ENCODE measurements at regions of chr5 and their contacts with region 1.

Region 1: GRCh38 chr5:96714951-96715451 is 52.8 kb downstream of the CAST start:
- DNase-seq: no peak
- H3K4me3 ChIP-seq: no peak overlapping the region
- H3K27ac ChIP-seq: peak overlapping the region; percentile 69
- H3K4me1 ChIP-seq: peaks cover 85% of the 10 kb centered on the region
- H3K27me3 ChIP-seq: no peaks in the 10 kb centered on the region
- CTCF ChIP-seq: no peak
- POLR2A ChIP-seq: no peak

Region 2: DNA sequence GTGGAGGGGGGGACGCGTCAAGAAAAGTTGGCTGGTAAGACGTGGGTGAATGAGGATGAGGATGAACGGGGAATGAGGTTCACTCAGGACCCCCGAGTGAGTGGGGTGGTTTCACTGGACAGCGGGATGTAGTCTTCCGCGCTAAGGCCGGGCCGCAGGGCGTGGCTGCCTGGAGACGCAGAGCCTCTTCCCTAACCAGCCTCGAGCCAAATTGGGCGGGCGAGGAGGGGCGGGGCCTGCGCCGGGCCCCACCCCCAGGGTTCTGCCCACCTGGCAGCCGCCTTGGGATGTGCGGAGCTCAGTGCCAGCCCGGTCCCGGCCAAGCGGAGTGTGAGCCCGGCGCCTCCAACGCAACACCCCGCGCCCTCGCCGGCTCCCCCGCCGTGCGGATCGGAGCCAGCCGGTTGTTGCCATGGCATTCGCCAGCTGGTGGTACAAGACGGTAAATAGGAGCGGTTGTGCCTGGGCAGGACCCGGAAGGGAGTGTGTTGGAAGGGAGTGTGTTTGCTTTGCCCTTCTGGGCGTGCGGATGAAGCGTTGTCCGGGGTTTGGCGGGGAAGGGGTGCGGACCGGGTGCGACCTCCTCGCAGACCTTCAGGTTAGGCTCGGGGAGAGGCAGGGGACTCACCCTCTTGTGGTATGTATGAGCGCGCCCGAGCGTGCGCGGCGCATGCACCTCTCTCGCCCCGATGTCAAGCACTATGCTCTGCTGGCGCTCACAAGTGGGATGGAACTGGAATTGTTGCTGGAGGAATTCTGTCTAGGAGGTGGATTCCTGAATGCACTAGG is 52.1 kb before region 1 on chr5:
- intact Hi-C with region 1: loop called (anchors 10 kb)
- DNase-seq: peak in 1 of 2 donors; percentile 95
- H3K4me3 ChIP-seq: peak overlapping the region; percentile 85 to 88
- H3K27ac ChIP-seq: peak overlapping the region; percentile 98
- H3K4me1 ChIP-seq: peaks cover 45% of the 10 kb centered on the region
- H3K27me3 ChIP-seq: no peaks in the 10 kb centered on the region
- CTCF ChIP-seq: peak in 1 of 3 experiments; percentile 11
- POLR2A ChIP-seq: peak in 1 of 2 donors; percentile 87

Measured in vagina (tissue), 2 donors.